ENCODE measurements at regions of chr9 and their contacts with region 1.

Region 1: DNA sequence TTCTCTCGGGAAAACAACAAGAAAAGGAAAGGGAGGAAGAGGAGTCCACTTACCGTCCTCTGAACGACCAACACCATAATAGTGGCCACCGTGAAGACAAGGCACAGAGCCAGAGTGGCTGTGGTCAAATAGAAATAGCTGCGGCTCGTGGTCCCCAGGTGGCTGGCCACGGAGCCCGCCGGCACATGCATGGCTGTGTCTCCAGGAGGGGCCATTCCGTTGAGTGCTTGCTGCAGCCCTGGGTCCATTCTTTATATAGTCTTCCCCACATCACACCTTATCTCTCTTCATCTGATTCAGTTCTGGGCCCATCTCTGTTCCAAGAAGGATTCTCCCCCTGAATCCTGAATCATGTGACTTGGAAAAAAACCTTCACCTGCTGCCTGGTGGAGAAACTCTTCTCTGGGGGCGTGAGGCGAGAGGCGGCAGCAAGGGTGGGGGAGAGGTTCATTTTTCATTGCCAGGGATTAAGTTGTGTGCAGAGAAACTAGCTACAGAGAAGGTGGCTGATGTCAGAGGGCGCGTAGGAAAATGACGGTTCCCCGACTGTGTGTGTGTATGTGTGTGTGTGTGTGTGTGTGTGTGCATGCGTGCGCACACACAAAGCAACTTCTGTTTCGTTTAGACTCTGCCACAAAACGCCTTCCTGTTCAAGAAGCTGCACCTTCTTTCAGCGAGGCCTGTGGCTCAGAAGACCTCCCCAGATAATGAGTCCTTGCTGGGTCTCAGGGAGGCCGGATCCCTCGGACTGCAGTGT is at the start of gene TNFSF8:
- DNase-seq: peak; percentile 50 to 92 (median 69)
- ATAC-seq: peak; percentile 80
- H3K4me3 ChIP-seq: peak within 1 kb of the TSS; percentile 91
- H3K4me3 Mint-ChIP-seq: peak within 1 kb of the TSS; percentile 98
- H3K27ac ChIP-seq: peak within 1 kb of the TSS; percentile 69 to 84
- H3K27ac Mint-ChIP-seq: peak within 1 kb of the TSS; percentile 95
- H3K4me1 ChIP-seq: peaks cover 33% of the 10 kb centered on the region
- H3K4me1 Mint-ChIP-seq: peaks cover 65% of the 10 kb centered on the region
- H3K27me3 ChIP-seq: no peaks in the 10 kb centered on the region
- H3K27me3 Mint-ChIP-seq: no peaks in the 10 kb centered on the region
- CTCF ChIP-seq: no peak
- total RNA-seq, gene TNFSF8: 70.9 to 71.6 TPM

Region 2: DNA sequence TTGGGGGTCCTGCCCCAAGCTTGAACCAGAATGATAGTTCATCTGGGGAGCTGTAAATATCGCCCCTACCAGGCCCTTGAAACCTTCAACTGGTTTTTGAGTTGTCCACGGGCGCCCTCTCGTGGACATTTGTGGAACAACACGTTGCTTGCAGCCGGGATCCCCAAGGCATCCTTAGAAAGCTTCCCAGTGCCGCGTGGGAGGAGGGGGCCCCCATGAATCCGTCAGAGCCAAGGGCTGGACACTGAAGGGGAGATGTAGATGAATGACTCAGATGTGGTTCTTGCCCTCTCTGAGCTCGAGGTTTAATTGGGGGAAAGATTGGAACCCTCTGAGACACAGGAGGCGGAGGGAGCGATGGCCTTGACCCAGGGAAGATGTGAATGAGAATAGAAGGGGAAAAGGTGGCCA is 639.2 kb before region 1 on chr9:
- CTCF ChIA-PET with region 1: no interaction called
- POLR2A ChIA-PET with region 1: no interaction called
- intact Hi-C with region 1: no loop called
- DNase-seq: peak; percentile 50 to 81 (median 64)
- ATAC-seq: no peak
- H3K4me3 ChIP-seq: no peak overlapping the region
- H3K4me3 Mint-ChIP-seq: no peak overlapping the region
- H3K27ac ChIP-seq: no peak overlapping the region
- H3K27ac Mint-ChIP-seq: no peak overlapping the region
- H3K4me1 ChIP-seq: peaks cover 3% of the 10 kb centered on the region
- H3K4me1 Mint-ChIP-seq: no peaks in the 10 kb centered on the region
- H3K27me3 ChIP-seq: no peaks in the 10 kb centered on the region
- H3K27me3 Mint-ChIP-seq: peaks cover 6% of the 10 kb centered on the region
- CTCF ChIP-seq: peak; percentile 94

Region 3: GRCh38 chr9:114385412-114386181 is 544.6 kb before region 1 on chr9:
- CTCF ChIA-PET with region 1: no interaction called
- POLR2A ChIA-PET with region 1: interaction called, 4 read pairs
- intact Hi-C with region 1: loop called in 1 of 2 experiments (anchors 10 kb)
- DNase-seq: peak; percentile 74 to 97 (median 82)
- ATAC-seq: peak; percentile 78
- H3K4me3 ChIP-seq: peak overlapping the region; percentile 99
- H3K4me3 Mint-ChIP-seq: peak overlapping the region; percentile 95
- H3K27ac ChIP-seq: peak overlapping the region; percentile 71 to 97
- H3K27ac Mint-ChIP-seq: peak overlapping the region; percentile 98
- H3K4me1 ChIP-seq: peaks cover 85% of the 10 kb centered on the region
- H3K4me1 Mint-ChIP-seq: peaks cover 80% of the 10 kb centered on the region
- H3K27me3 ChIP-seq: no peaks in the 10 kb centered on the region
- H3K27me3 Mint-ChIP-seq: no peaks in the 10 kb centered on the region
- CTCF ChIP-seq: no peak

Region 4: DNA sequence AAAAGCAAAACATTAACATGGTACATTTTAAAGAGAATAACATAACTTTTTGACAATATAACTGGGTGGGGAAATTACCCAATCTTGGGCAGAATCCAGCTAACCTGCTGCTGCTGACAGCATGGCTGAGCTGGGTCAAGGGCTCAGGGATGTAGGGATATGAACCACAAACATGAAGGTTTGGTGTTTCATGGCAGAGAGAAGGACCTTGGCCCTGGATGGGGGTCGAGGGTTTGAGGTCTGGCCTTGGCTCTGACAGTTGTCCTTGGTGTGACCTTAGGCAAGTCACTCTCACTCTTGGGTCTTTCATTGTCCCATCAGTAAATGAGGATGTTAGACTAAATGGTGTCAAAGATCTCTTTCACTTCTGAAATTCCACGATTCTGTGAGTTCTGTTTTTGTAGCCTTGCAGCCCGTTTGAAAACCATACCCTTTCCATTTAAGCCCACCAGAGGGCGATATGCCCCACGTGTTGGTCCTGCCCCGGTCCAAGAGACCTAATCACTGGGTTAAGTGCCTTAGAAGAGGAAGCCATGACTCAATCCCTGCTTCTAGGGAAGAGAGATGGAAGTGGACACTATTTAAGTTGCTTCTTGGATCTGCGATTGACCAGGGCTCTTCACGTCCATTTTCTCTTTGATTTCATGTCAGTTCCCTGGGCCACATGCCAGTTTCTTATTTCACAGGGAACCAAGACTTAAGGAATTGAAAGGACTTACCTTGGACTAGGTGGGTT is 191.5 kb before region 1 on chr9:
- CTCF ChIA-PET with region 1: interaction called, 5 read pairs
- POLR2A ChIA-PET with region 1: interaction called, 8 read pairs
- intact Hi-C with region 1: loop called in 1 of 2 experiments (anchors 5 kb)
- DNase-seq: peak; percentile 53 to 89 (median 64)
- ATAC-seq: peak; percentile 88
- H3K4me3 ChIP-seq: no peak overlapping the region
- H3K4me3 Mint-ChIP-seq: peak overlapping the region; percentile 18
- H3K27ac ChIP-seq: no peak overlapping the region
- H3K27ac Mint-ChIP-seq: peak overlapping the region; percentile 85
- H3K4me1 ChIP-seq: peaks cover 40% of the 10 kb centered on the region
- H3K4me1 Mint-ChIP-seq: peaks cover 39% of the 10 kb centered on the region
- H3K27me3 ChIP-seq: no peaks in the 10 kb centered on the region
- H3K27me3 Mint-ChIP-seq: no peaks in the 10 kb centered on the region
- CTCF ChIP-seq: peak; percentile 88

Region 5: DNA sequence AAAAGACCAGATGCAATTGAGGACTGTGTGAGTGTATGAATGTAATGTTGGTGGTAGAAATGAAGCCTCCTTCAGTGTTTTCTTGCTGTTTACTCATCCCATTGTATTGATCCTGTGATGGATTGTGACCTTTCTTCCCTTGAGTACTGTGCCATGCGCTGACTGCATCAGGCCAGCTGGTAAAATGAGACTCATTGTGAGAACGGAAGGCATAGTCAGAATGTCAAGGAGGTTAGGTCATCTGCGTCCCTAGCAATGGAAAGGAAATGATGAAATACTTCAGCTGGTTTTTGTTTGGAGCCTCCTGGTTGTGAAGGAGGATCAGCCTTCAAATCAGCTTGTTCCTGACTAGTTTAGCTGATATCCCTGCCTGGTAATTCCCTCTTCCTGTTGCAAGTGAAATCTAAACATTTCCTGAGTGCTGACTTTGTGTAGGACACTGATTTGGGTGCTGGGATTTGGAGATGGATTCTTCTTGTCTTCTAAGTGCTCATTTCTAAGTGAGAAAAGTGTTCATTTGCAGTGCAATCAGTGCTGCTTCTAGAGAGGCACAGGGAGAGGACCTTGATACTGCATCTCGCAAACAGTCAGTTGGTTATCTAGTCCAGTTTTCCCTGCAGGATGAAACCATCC is 35.3 kb before region 1 on chr9:
- CTCF ChIA-PET with region 1: interaction called, 3 read pairs
- POLR2A ChIA-PET with region 1: interaction called, 86 read pairs
- intact Hi-C with region 1: loop called in 1 of 2 experiments (anchors 1 kb)
- DNase-seq: peak in 3 of 14 experiments; percentile 44 to 58 (median 47)
- ATAC-seq: no peak
- H3K4me3 ChIP-seq: no peak overlapping the region
- H3K4me3 Mint-ChIP-seq: peak overlapping the region; percentile 40
- H3K27ac ChIP-seq: no peak overlapping the region
- H3K27ac Mint-ChIP-seq: peak overlapping the region; percentile 33
- H3K4me1 ChIP-seq: peaks cover 57% of the 10 kb centered on the region
- H3K4me1 Mint-ChIP-seq: peaks cover 51% of the 10 kb centered on the region
- H3K27me3 ChIP-seq: no peaks in the 10 kb centered on the region
- H3K27me3 Mint-ChIP-seq: no peaks in the 10 kb centered on the region
- CTCF ChIP-seq: no peak

Region 6: GRCh38 chr9:114914139-114914538 is 16.1 kb before region 1 on chr9:
- CTCF ChIA-PET with region 1: interaction called, 4 read pairs
- POLR2A ChIA-PET with region 1: interaction called, 33 read pairs
- intact Hi-C with region 1: loop called in 1 of 2 experiments (anchors 2 kb)
- DNase-seq: no peak
- ATAC-seq: no peak
- H3K4me3 ChIP-seq: no peak overlapping the region
- H3K4me3 Mint-ChIP-seq: no peak overlapping the region
- H3K27ac ChIP-seq: no peak overlapping the region
- H3K27ac Mint-ChIP-seq: peak overlapping the region; percentile 85
- H3K4me1 ChIP-seq: peaks cover 44% of the 10 kb centered on the region
- H3K4me1 Mint-ChIP-seq: peaks cover 91% of the 10 kb centered on the region
- H3K27me3 ChIP-seq: no peaks in the 10 kb centered on the region
- H3K27me3 Mint-ChIP-seq: no peaks in the 10 kb centered on the region
- CTCF ChIP-seq: no peak

Region 7: GRCh38 chr9:114945616-114946412 is 15.6 kb after region 1 on chr9:
- CTCF ChIA-PET with region 1: no interaction called
- POLR2A ChIA-PET with region 1: interaction called, 10 read pairs
- intact Hi-C with region 1: no loop called
- DNase-seq: no peak
- ATAC-seq: no peak
- H3K4me3 ChIP-seq: no peak overlapping the region
- H3K4me3 Mint-ChIP-seq: no peak overlapping the region
- H3K27ac ChIP-seq: no peak overlapping the region
- H3K27ac Mint-ChIP-seq: no peak overlapping the region
- H3K4me1 ChIP-seq: no peaks in the 10 kb centered on the region
- H3K4me1 Mint-ChIP-seq: peaks cover under 1% of the 10 kb centered on the region
- H3K27me3 ChIP-seq: no peaks in the 10 kb centered on the region
- H3K27me3 Mint-ChIP-seq: no peaks in the 10 kb centered on the region
- CTCF ChIP-seq: no peak